Panc1 (cell line): ENCODE measurements at regions of chr20 and their contacts with region 1.

Region 1: GRCh38 chr20:43840382-43841070 is 74.1 kb upstream of the TOX2 start:
- DNase-seq: no peak
- ATAC-seq: peak; percentile 76
- H3K4me3 ChIP-seq: no peak overlapping the region
- H3K27ac ChIP-seq: no peak overlapping the region
- H3K4me1 ChIP-seq: peaks cover 13% of the 10 kb centered on the region
- H3K27me3 ChIP-seq: no peaks in the 10 kb centered on the region
- CTCF ChIP-seq: peak; percentile 86

Region 2: GRCh38 chr20:43749734-43750294 is 90.7 kb before region 1 on chr20:
- CTCF ChIA-PET with region 1: interaction called, 5 read pairs
- POLR2A ChIA-PET with region 1: no interaction called
- in situ Hi-C with region 1: no loop called
- intact Hi-C with region 1: loop called (anchors 5 kb)
- DNase-seq: peak; percentile 27
- ATAC-seq: peak; percentile 94
- H3K4me3 ChIP-seq: no peak overlapping the region
- H3K27ac ChIP-seq: no peak overlapping the region
- H3K4me1 ChIP-seq: peaks cover 3% of the 10 kb centered on the region; the same call in 1 of the 2 replicates
- H3K27me3 ChIP-seq: no peaks in the 10 kb centered on the region
- CTCF ChIP-seq: peak; percentile 99